ENCODE measurements at regions of chr3 and their contacts with region 1.

Region 1: DNA sequence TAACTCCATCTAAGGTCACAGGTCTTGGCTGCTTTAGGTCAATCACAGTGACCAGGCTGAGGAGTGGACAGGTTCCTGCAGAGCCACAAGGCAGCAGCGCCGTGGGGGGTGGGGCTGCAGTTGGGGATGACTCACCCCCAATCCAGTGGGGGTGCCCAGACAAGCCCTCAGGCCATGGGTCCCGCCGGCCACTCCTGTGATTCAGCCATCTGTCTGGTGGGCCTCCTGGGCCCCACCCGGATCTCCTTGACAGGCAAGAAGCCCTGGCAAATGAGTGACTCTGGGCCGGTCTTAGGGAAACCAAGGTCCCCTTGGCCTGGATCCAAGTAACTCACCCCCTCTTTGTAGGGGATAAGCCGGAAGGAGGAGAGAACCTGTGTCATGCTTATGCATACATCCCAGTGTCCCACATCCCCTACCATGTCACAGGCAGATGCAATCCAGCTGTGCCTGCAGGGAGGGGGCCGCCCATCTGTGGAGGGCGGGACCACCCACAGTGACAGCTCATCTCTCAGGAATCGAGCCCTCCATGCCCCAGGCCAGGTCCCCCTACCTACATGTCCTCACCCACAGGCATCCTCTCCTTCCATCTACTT is 495 bp upstream of the COL7A1 start:
- DNase-seq: peak; percentile 59 to 80
- H3K4me3 ChIP-seq: peak overlapping the region in 2 of 4 experiments; percentile 15 to 57; a peak in 3 of 8 replicates
- H3K27ac ChIP-seq: no peak overlapping the region
- H3K4me1 ChIP-seq: peaks cover 3 to 18% (median 15%) of the 10 kb centered on the region in 4 experiments; a peak in 6 of 7 replicates
- H3K27me3 ChIP-seq: peaks cover 0 to 6% (median 0%) of the 10 kb centered on the region in 4 experiments; a peak in 4 of 7 replicates
- CTCF ChIP-seq: no peak
- EP300 ChIP-seq: no peak
- POLR2A ChIP-seq: no peak
- RAD21 ChIP-seq: no peak

Region 2: GRCh38 chr3:48581621-48582481 is 13.8 kb before region 1 on chr3:
- CTCF ChIA-PET with region 1: interaction called, 4 read pairs
- POLR2A ChIA-PET with region 1: interaction called, 14 read pairs
- DNase-seq: no peak
- H3K4me3 ChIP-seq: no peak overlapping the region
- H3K27ac ChIP-seq: no peak overlapping the region
- H3K4me1 ChIP-seq: no peaks in the 10 kb centered on the region
- H3K27me3 ChIP-seq: no peaks in the 10 kb centered on the region
- CTCF ChIP-seq: no peak
- EP300 ChIP-seq: no peak
- POLR2A ChIP-seq: no peak
- RAD21 ChIP-seq: no peak

Region 3: DNA sequence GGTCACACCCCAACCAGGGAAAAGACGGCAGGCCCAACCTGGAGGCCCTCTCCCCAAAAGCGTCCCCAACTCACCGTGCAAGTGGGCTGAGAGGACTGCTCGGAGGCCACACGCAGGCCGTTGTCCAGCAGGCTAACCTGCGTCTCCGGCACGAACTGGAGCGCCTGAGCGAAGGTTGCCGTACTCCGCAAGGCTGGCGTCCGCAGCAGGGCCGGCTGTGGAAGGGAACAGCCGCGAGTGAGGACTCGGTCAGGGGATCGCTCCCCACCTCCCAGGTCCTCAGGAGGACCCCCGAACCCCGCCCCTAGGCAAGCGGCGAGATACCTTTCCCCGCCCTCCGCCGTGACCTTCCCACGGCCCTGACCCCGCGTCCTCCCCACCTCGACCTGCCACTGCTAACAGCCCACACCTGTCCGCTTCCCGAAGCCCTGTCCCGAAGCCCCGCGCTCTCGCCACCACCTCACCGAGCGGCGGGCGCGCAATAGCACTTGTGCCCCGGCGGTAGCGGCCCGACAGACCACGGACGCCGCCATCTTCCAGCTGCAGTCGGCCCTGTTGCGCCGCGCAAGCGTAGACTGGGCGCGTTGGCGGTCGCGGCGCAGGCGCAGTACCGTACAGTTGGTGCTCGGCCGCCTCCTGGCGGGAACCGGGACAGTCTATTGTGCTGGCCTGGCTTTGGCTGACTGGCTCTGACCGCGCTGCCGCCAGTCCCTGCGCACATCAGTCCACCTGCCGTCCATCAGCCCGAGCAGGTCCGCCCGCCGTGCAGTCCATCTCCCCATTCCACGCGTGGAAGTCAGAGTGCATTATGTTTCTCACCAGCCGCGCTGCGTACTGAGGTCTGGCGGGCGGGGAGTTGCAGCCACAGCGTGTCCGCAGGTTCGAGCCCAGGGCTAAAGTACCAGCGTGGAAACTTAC is 13.7 kb after region 1 on chr3 and contains the start of gene UQCRC1:
- CTCF ChIA-PET with region 1: interaction called, 4 read pairs
- POLR2A ChIA-PET with region 1: interaction called, 23 read pairs
- DNase-seq: peak; percentile 88 to 93
- H3K4me3 ChIP-seq: peak within 1 kb of the TSS; percentile 79 to 99 (median 91)
- H3K27ac ChIP-seq: peak within 1 kb of the TSS; percentile 85
- H3K4me1 ChIP-seq: peaks cover 0 to 2% (median under 1%) of the 10 kb centered on the region in 4 experiments; a peak in 2 of 7 replicates
- H3K27me3 ChIP-seq: no peaks in the 10 kb centered on the region
- CTCF ChIP-seq: peak; percentile 64 to 74 (median 71)
- EP300 ChIP-seq: no peak
- POLR2A ChIP-seq: peak; percentile 85 to 87
- RAD21 ChIP-seq: peak in 1 of 2 experiments; percentile 38; a peak in 3 of 4 replicates
- total RNA-seq, gene UQCRC1: 310 TPM in 2 replicates

Region 4: GRCh38 chr3:48642605-48643004 is 47.0 kb after region 1 on chr3:
- CTCF ChIA-PET with region 1: no interaction called
- POLR2A ChIA-PET with region 1: no interaction called
- DNase-seq: no peak
- H3K4me3 ChIP-seq: no peak overlapping the region
- H3K27ac ChIP-seq: no peak overlapping the region
- H3K4me1 ChIP-seq: no peaks in the 10 kb centered on the region
- H3K27me3 ChIP-seq: no peaks in the 10 kb centered on the region
- CTCF ChIP-seq: no peak
- EP300 ChIP-seq: no peak
- POLR2A ChIP-seq: no peak
- RAD21 ChIP-seq: no peak

Region 5: DNA sequence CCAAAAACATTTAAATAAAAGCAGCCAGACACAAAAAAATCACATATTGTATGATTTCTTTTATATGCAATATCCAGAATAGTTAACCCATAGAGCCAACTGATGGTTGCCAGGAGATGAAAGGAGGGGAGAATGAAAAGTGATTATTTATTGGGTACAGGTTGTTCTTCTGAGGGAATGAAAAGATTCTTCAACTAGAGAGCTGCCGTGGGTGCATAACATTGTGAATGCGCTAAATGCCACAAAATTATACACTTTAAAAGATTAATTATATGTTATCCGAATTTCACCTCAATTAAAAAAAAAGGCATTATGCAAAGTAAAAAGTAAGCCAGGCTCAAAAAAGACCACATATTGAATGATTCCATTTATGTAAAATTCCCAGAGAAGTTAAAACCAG is 215.9 kb after region 1 on chr3:
- CTCF ChIA-PET with region 1: no interaction called
- POLR2A ChIA-PET with region 1: no interaction called
- DNase-seq: no peak
- H3K4me3 ChIP-seq: no peak overlapping the region
- H3K27ac ChIP-seq: no peak overlapping the region
- H3K4me1 ChIP-seq: no peaks in the 10 kb centered on the region
- H3K27me3 ChIP-seq: no peaks in the 10 kb centered on the region
- CTCF ChIP-seq: no peak
- EP300 ChIP-seq: no peak
- POLR2A ChIP-seq: no peak
- RAD21 ChIP-seq: no peak

Measured in H1 (cell line).